ENCODE measurements at regions of chr11 and their contacts with region 1.

Region 1: DNA sequence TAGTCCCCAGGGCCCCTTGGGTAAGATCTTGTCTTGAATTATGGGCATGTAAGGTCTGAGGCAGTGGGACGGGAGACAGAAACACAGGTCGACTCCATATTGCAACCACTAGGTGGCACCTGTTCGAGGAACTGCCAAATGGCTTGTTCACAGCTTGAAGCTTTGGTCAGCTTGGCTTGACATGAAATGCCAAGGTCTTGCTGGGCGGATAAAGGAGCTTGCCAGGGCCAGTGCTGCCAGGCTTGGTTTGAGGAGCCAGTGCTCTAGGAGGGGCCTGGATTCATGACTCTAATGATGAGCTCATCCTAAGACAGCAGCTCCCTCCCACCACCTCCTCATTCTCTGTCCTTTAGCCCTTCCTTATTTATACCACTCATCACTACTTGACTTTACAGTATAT is 11.9 kb upstream of the NRIP3 start:
- DNase-seq: peak; percentile 29
- H3K4me3 ChIP-seq: no peak overlapping the region
- H3K27ac ChIP-seq: no peak overlapping the region
- H3K4me1 ChIP-seq: peaks cover 33% of the 10 kb centered on the region
- H3K27me3 ChIP-seq: no peaks in the 10 kb centered on the region
- CTCF ChIP-seq: peak; percentile 85

Region 2: GRCh38 chr11:9137293-9138132 is 121.8 kb after region 1 on chr11:
- intact Hi-C with region 1: loop called (anchors 5 kb)
- DNase-seq: peak; percentile 66
- H3K4me3 ChIP-seq: no peak overlapping the region
- H3K27ac ChIP-seq: peak overlapping the region; percentile 31
- H3K4me1 ChIP-seq: peaks cover 34% of the 10 kb centered on the region
- H3K27me3 ChIP-seq: no peaks in the 10 kb centered on the region
- CTCF ChIP-seq: peak; percentile 98